ENCODE measurements at regions of chr10 and their contacts with region 1.

Region 1: DNA sequence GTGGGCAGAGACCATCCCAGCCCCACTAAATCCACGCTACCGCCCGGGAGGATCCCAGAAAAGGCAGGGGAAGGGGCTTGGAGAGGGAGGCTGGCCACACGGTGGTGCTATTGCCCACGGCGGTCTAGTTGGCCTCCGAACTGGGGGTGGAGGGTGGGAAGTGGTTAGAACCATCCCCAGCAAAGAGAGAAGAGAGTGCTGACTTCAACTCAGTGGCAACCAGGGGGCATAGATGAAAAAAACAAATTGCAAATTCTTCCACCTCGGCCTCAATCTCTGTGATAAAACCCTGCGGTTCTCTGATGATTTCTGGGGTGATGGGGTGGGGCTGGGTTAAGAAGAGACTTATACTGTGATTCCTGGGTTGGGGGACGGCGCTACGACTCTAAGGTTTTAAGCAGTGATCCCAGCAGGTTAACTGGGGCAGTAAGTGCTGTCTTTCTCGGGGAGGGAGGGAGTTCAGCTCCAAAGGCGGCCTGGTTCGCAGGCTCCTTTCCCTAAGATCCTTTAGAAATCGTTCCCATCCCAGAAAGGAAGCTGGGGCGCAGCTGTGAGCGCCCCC is 154.5 kb upstream of the LYZL2 start:
- DNase-seq: peak; percentile 84 to 89
- H3K4me3 ChIP-seq: peak overlapping the region in 1 of 3 donors; percentile 64
- H3K27ac ChIP-seq: peak overlapping the region; percentile 98 to 99 (median 99)
- H3K4me1 ChIP-seq: peaks cover 5 to 12% of the 10 kb centered on the region in 2 donors
- H3K27me3 ChIP-seq: no peaks in the 10 kb centered on the region
- CTCF ChIP-seq: peak; percentile 68 to 97 (median 87)
- POLR2A ChIP-seq: peak in 1 of 2 donors; percentile 39

Region 2: DNA sequence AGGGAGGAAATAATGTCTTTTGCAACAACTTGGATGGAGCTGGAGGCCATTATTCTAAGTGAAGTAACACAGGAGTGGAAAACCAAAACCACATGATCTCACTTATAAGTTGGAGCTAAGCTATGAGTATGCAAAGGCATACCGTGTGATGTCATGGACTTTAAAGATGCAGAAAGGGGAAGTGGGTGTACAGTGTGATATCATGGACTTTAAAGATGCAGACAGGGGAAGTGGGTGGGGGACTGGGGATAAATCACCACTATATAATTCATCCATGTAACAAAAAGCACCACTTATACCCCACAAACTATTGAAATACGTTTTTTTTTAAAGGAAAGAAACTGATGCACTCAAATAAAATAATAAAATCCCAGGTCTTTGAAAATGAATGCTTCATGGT is 184.0 kb before region 1 on chr10:
- intact Hi-C with region 1: no loop called
- DNase-seq: no peak
- H3K4me3 ChIP-seq: no peak overlapping the region
- H3K27ac ChIP-seq: no peak overlapping the region
- H3K4me1 ChIP-seq: no peaks in the 10 kb centered on the region
- H3K27me3 ChIP-seq: no peaks in the 10 kb centered on the region
- CTCF ChIP-seq: no peak
- POLR2A ChIP-seq: no peak

Region 3: DNA sequence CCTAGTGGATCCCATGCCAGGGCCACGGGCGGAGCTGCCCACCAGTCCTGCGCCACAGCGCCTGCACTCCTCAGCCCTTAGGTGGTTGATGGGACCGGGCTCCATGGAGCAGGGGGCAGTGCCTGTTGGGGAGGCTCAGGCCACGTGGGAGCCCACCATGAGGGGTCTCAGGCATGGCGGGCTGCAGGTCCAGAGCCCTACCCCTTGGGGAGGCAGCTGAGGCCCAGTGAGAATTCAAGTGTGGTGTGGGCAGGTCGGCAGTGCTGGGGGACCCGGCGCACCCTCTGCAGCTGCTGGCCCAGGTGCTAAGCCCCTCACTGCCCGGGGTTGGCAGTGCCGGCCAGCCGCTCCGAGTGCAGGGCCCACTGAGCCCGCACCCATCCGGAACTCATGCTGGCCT is 14.7 kb before region 1 on chr10:
- intact Hi-C with region 1: no loop called
- DNase-seq: no peak
- H3K4me3 ChIP-seq: no peak overlapping the region
- H3K27ac ChIP-seq: no peak overlapping the region
- H3K4me1 ChIP-seq: no peaks in the 10 kb centered on the region
- H3K27me3 ChIP-seq: no peaks in the 10 kb centered on the region
- CTCF ChIP-seq: no peak
- POLR2A ChIP-seq: no peak

Region 4: GRCh38 chr10:31031558-31032257 is 247.7 kb after region 1 on chr10 and contains the start of gene ZNF438:
- intact Hi-C with region 1: loop called (anchors 10 kb)
- DNase-seq: peak; percentile 93
- H3K4me3 ChIP-seq: peak within 1 kb of the TSS; percentile 17 to 80 (median 49)
- H3K27ac ChIP-seq: peak within 1 kb of the TSS; percentile 99 to 100 (median 100)
- H3K4me1 ChIP-seq: peaks cover 27 to 44% of the 10 kb centered on the region in 2 donors
- H3K27me3 ChIP-seq: no peaks in the 10 kb centered on the region
- CTCF ChIP-seq: peak in 5 of 6 experiments; percentile 29 to 87 (median 69)
- POLR2A ChIP-seq: peak; percentile 4 to 93
- total RNA-seq, gene ZNF438: 19.2 to 21.8 (median 20.3) TPM

Region 5: DNA sequence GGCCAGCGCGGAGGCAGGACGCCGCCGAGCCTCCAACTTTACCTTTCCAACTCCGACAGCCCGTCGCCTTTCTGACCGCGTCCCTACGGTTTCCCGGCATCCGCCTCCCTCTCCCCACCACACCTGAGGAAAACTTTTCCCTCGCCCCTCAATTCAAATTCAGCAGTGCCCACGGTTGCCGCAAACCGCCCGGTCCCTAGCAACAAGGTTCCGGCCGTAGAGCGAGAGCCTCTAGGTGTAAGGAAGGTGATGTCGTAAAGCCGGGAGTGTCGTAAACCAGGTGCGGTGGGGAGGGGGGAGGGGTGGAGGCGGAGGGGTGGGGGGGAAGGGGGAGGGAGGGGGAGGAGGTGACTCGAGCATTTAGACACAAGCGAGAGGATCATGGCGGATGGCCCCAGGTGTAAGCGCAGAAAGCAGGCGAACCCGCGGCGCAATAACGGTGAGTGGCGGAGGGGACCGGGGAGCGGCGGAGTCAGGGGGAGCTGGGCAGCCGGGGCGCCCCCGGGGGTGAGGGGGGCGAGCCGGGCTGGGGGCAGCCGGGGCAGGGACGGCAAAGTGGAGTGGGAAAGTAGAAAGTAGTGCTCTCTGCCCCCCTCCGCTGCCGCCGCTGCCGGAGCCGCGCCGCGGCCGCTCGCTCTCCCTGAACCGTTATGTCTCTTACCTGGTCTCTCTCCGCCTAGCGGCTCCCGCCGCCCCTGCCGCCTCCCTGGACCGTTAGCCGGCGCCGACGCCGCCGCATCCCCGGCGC is 535.0 kb after region 1 on chr10 and contains the start of gene ZEB1:
- intact Hi-C with region 1: loop called (anchors 5 kb)
- DNase-seq: peak; percentile 95 to 96
- H3K4me3 ChIP-seq: peak within 1 kb of the TSS; percentile 71 to 97 (median 88)
- H3K27ac ChIP-seq: peak within 1 kb of the TSS; percentile 81 to 98 (median 96)
- H3K4me1 ChIP-seq: peaks cover 0 to 7% of the 10 kb centered on the region in 2 donors
- H3K27me3 ChIP-seq: no peaks in the 10 kb centered on the region
- CTCF ChIP-seq: peak; percentile 40 to 80 (median 68)
- POLR2A ChIP-seq: peak; percentile 9 to 63
- total RNA-seq, gene ZEB1: 51.7 to 67.7 (median 57.9) TPM

Region 6: DNA sequence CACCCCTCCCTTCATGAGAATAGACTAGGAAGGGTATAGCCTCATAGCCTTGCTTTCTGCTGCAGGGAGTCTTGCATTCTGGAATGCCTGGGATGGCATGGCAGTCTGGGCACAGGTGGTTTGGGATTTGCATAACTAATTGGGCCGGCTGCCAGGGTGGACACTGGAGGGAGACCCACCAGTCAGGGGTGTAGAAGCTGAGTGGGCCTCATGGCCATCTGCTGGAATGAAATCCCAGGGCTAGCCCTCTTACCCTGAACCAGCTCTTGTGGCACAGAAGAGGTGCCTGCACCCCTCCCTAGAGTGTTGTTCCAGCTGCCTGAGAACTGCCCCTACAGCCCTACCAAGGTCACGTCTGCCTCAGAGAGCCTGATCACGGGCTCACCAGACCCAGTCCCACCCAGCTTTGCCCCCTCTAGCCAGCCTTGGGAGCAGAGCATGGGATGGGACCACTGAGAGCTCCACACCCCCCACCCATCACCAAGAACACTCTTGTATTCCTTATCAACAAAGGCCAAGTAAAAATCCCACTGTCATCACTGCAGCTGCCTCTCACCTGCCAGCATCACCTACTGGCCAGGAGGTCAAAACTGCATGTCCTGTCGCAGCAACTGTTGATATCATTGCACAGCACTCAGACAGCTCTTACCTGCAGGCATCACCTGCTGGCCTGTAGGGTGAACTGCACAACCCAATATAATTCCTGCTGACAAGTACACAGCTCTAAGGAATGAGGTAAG is 683.9 kb after region 1 on chr10:
- intact Hi-C with region 1: loop called (anchors 10 kb)
- DNase-seq: peak; percentile 52 to 69
- H3K4me3 ChIP-seq: no peak overlapping the region
- H3K27ac ChIP-seq: no peak overlapping the region
- H3K4me1 ChIP-seq: no peaks in the 10 kb centered on the region
- H3K27me3 ChIP-seq: no peaks in the 10 kb centered on the region
- CTCF ChIP-seq: peak; percentile 46 to 96 (median 82)
- POLR2A ChIP-seq: no peak

Region 7: GRCh38 chr10:31759799-31760626 is 976.0 kb after region 1 on chr10:
- intact Hi-C with region 1: loop called (anchors 10 kb)
- DNase-seq: peak; percentile 97
- H3K4me3 ChIP-seq: peak overlapping the region; percentile 68 to 91 (median 71)
- H3K27ac ChIP-seq: peak overlapping the region; percentile 96 to 98 (median 98)
- H3K4me1 ChIP-seq: peaks cover 13 to 29% of the 10 kb centered on the region in 2 donors
- H3K27me3 ChIP-seq: no peaks in the 10 kb centered on the region
- CTCF ChIP-seq: no peak
- POLR2A ChIP-seq: peak; percentile 93 to 97